Right ventricle myocardium inferior (tissue), 1 donor: ENCODE measurements at regions of chr17 and their contacts with region 1.

Region 1: GRCh38 chr17:29640413-29640812 is 17.7 kb upstream of the CORO6 start:
- DNase-seq: no peak
- ATAC-seq: peak; percentile 32

Region 2: DNA sequence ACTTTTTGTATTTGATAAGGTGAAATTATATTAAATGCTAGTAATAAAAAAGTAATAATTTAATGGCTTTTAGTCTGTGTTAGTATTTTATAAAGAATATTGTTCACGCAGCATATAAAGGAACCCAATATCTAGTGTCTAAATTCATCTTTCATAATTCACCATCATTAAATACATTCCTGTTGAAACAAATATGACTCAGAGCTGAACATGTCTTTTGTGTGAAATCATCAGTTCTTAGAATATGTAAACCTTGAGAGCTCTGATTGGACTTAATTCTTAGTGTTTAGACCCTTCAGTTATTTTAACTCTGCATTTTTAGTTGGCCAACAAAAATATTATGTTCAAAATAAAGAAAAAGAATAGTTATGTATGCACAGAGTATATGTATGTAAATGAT is 145.4 kb before region 1 on chr17:
- intact Hi-C with region 1: no loop called
- DNase-seq: no peak
- ATAC-seq: no peak

Region 3: DNA sequence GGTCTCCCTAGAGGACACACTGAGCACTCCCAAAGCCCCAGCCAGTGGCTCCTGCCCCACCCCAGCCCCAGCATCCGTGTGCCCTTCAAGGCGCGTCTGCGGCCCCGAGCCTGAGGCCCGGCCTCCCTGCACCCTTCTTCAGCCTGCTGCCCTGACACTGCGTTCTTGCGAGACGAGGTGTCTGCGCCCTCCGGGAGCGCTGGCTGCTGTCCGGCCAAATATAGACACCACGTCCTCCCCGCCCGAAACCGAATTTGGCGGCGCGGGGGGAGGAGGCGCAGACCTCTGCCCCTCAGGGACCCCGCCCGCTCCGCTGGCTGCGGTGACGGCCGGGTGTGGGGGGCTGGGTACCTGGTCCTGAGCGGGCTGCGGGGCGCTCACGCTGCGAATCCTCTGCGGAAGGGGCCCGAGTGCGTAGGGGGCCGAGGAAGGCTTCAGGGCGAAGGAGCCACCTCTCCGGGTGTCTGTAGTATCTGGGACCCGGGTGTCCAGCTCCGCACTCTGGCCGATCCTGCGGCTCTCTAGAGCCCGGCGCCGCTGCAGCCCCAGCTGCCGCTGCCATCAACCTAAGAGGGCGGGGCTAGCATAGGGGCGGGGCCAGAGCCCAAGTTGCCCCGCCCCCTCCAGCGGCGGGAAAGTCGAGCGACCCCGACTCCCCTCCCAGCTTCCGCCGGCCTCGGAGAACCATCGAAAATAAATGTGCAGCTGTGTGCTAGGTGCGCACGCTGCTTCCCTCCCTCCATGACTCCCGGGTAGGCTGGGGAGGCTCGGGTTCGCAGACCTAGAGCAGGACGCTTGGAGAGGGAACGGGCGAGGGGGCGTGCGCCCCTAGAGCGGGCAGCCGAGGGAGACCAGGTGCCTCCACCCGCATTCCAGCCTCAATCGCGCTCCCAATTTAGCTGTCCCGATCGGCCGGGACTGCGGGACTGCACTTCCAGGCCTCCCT is 17.8 kb before region 1 on chr17 and contains the start of gene CORO6:
- intact Hi-C with region 1: loop called (anchors 2 kb)
- DNase-seq: peak; percentile 86
- ATAC-seq: peak; percentile 72
- total RNA-seq, gene CORO6: 93.2 TPM

Region 4: GRCh38 chr17:29682054-29682453 is 41.6 kb after region 1 on chr17:
- intact Hi-C with region 1: loop called (anchors 2 kb)
- DNase-seq: no peak
- ATAC-seq: no peak

Region 5: GRCh38 chr17:29760761-29761696 is 120.6 kb after region 1 on chr17:
- intact Hi-C with region 1: loop called (anchors 5 kb)
- DNase-seq: peak; percentile 98
- ATAC-seq: peak; percentile 99

Region 6: GRCh38 chr17:29777663-29778062 is 137.2 kb after region 1 on chr17:
- intact Hi-C with region 1: loop called (anchors 1 kb)
- DNase-seq: no peak
- ATAC-seq: no peak

Region 7: GRCh38 chr17:29931231-29931932 is 291.0 kb after region 1 on chr17:
- intact Hi-C with region 1: loop called (anchors 5 kb)
- DNase-seq: no peak
- ATAC-seq: peak; percentile 79